Right ventricle myocardium inferior (tissue), 1 donor: ENCODE measurements at regions of chr20 and their contacts with region 1.

Region 1: GRCh38 chr20:41617931-41618806 is at the start of gene CHD6:
- DNase-seq: peak; percentile 99
- ATAC-seq: peak; percentile 99
- total RNA-seq, gene CHD6: 33.0 TPM

Region 2: GRCh38 chr20:41476013-41476752 is 142.0 kb before region 1 on chr20:
- intact Hi-C with region 1: loop called (anchors 5 kb)
- DNase-seq: no peak
- ATAC-seq: peak; percentile 88

Region 3: DNA sequence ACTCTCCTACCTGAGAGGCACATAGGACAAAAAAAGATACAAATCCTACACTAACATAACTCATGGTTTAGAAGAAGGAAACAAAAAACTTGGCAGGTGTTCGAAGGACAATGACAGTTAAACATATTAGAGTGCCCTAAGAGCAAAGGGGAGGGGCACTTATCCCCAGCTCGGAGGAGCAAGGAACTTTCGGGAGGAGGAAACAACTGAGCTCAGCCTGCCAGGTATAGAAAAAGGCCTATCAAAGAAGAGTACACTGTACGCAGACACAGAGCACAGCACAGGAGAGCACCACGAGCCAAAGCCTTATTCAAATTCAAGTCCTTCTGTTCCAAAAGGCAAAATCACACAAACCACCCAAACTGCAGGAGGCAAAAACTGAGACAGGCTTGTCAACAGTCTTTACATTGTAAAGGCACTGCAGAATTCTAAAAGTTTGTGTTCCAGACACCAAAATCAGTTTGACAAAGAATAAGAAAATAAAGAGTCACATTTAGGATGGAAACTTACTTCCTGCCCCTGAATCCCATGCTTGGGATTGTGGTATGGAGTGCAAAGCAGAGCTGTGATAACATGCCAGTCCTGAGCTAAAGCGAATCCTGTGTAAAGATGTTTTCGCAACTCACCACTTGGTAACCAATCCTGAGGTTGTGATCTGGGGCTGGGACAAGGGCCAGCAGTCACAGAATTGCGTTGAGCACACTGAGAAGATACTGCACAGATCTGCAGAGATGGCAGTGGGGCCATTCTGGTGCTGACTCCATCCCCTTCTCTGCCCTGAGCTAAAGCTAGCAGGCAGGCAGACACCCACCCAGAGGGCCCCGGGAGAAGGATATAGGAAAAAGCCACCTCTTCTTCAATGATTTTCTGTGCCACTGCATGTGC is 108.6 kb before region 1 on chr20:
- intact Hi-C with region 1: loop called (anchors 5 kb)
- DNase-seq: peak; percentile 55
- ATAC-seq: peak; percentile 84